ENCODE measurements at regions of chr18 and their contacts with region 1.

Region 1: DNA sequence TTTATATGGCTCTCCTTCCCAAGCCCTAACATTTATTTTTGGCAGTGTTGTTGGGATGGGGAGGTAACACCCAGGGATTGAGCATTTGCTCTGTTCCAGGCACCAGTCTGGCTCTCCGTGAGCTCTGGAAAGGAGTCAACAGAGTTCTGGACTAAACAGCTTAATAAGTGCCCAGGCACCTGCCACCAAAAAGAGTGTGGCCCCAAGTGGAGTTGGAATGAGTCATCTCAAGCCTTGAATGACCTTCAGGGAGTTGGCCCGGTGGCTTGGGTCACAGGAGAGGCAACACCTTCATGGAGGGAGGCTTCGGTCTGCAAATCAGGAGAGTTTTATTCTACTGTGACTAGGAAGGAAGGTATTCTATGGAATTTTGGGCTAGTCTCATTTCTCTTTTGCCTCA is 203.2 kb downstream of the DLGAP1 start:
- DNase-seq: no peak
- H3K4me3 Mint-ChIP-seq: no peak overlapping the region
- H3K27ac Mint-ChIP-seq: no peak overlapping the region
- H3K4me1 Mint-ChIP-seq: no peaks in the 10 kb centered on the region
- H3K27me3 Mint-ChIP-seq: no peaks in the 10 kb centered on the region

Region 2: GRCh38 chr18:4319738-4320677 is 68.1 kb after region 1 on chr18:
- intact Hi-C with region 1: loop called (anchors 10 kb)
- DNase-seq: no peak
- H3K4me3 Mint-ChIP-seq: no peak overlapping the region
- H3K27ac Mint-ChIP-seq: no peak overlapping the region
- H3K4me1 Mint-ChIP-seq: no peaks in the 10 kb centered on the region
- H3K27me3 Mint-ChIP-seq: no peaks in the 10 kb centered on the region